Activated naive CD4-positive, alpha-beta T cell treated with anti-CD3 and anti-CD28 coated beads for 36 hours (primary cell): ENCODE measurements at regions of chr9 and their contacts with region 1.

Region 1: DNA sequence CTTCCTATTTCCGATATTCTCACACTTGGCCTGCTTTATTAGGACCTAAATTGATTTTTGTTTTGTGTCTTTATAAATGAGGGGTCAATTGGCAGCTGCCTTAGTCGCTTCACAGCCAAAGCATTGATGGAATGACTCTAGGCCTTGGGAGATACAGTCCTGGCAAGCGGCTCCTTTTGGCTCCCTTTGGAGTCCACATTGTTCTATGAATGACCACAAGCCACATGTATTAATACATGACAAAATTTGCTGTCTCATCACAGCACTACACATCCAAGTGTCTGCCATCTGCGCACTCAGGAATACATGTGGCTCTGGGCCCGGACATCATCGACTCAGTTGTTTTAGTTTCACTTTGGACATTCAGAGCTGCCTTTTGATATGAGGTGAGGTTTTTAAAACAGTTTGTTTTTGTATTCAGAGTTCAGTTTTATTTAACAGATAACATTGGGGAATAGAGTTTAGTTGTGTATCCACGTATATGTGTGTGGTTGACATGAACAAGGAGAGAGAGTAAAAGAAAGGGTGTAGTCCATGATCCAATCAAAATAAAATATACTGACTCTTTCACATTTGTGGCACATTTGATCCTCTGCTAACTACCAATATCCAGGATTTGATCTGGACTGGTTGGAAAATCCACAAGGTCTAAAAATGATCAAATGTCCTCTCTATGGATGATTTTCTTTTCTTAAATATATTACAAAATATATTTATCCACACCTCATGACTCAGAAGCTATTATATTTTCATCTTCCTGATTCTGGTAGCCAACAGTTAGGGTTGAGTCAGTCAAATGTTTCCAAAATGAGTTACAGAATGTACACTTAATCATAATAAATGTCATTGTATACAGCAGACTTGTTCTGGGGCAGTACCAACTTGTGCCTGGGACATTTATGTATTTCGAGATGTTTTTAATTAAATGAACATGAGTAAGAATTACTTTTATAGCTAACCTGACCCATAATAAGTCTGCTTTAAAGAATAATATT is 114.0 kb upstream of the MTAP start:
- DNase-seq: no peak
- H3K4me3 Mint-ChIP-seq: no peak overlapping the region
- H3K27ac Mint-ChIP-seq: peak overlapping the region; percentile 17
- H3K4me1 Mint-ChIP-seq: peaks cover 64% of the 10 kb centered on the region
- H3K27me3 Mint-ChIP-seq: no peaks in the 10 kb centered on the region

Region 2: GRCh38 chr9:21559424-21560280 is 128.8 kb before region 1 on chr9:
- CTCF ChIA-PET with region 1: no interaction called
- intact Hi-C with region 1: loop called (anchors 2 kb)
- DNase-seq: peak; percentile 61
- H3K4me3 Mint-ChIP-seq: peak overlapping the region; percentile 88
- H3K27ac Mint-ChIP-seq: peak overlapping the region; percentile 56
- H3K4me1 Mint-ChIP-seq: peaks cover 43% of the 10 kb centered on the region
- H3K27me3 Mint-ChIP-seq: no peaks in the 10 kb centered on the region

Region 3: DNA sequence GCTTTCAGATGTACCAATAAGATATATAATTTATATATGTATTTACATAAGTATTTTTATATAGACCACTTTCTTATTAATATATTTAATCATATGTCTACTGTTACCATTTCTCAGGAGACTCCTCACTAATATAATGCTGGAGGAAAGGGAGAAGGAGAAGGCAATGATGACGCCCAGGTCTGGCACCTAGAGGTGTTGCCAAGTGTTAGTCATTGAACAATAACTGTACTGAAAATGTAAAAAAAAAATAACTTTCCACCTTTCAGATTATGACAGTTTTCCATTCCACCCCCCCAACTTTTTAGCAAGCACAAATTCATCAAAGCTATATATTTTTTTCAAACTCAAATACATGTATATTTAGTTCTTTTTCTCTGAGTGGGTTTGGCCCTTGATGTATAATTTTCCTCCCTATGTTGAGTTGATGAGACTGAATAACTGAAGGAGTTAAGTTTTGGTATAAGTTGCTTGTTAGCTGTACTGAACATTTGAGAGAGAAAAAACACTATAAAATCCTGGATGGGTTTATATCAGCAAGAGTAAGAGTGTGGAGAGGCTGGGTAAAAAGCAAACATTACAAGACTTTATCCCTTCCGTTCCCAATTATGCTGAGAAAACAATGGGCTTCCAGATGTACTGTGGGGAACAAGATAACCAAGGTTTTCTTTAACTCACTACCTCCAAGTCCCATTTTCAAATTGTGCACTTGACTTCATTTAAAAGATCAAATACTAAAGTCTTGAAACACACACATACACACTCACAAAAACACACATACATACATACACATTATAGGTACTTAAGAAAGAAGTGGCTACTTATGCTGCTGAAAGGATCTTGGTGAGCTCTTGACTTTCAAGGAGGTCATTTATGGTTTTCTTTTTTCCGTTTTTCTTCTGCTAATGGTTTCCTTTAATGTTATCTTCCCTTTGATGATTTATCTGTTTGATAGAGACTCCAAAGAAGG is 63.4 kb before region 1 on chr9:
- CTCF ChIA-PET with region 1: interaction called, 6 read pairs
- intact Hi-C with region 1: loop called (anchors 1 kb)
- DNase-seq: peak; percentile 26
- H3K4me3 Mint-ChIP-seq: no peak overlapping the region
- H3K27ac Mint-ChIP-seq: peak overlapping the region; percentile 42
- H3K4me1 Mint-ChIP-seq: peaks cover 34% of the 10 kb centered on the region
- H3K27me3 Mint-ChIP-seq: no peaks in the 10 kb centered on the region

Region 4: DNA sequence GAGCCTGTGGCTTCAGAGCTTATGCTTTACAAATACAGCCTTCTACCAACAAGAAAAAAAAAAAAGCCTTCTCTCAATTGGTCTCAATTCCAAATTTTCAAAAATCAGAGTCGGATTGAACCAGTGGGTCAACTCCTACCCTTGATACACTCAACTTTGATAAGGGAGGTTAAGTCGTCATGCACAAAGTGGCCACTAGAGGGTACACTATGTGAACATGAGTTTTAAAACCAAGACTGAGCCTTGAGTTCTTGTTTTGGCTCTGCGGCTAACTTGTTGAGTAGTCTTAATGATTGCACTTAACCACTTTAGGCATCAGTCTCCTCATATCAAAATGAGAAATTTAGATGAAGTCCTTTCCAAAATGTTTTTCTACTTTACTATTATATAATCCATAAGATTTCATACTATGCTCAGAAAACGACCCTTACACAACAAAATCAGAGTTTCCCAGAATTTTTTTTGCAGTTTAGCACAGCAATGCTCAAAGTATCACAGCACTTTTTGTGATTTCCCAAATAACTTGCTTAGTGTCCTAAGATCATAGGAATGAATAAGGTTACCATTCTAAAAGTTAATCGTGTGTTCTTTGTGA is 21.2 kb after region 1 on chr9:
- CTCF ChIA-PET with region 1: interaction called, 10 read pairs
- intact Hi-C with region 1: loop called (anchors 2 kb)
- DNase-seq: peak; percentile 86
- H3K4me3 Mint-ChIP-seq: no peak overlapping the region
- H3K27ac Mint-ChIP-seq: no peak overlapping the region
- H3K4me1 Mint-ChIP-seq: peaks cover 14% of the 10 kb centered on the region
- H3K27me3 Mint-ChIP-seq: no peaks in the 10 kb centered on the region

Region 5: DNA sequence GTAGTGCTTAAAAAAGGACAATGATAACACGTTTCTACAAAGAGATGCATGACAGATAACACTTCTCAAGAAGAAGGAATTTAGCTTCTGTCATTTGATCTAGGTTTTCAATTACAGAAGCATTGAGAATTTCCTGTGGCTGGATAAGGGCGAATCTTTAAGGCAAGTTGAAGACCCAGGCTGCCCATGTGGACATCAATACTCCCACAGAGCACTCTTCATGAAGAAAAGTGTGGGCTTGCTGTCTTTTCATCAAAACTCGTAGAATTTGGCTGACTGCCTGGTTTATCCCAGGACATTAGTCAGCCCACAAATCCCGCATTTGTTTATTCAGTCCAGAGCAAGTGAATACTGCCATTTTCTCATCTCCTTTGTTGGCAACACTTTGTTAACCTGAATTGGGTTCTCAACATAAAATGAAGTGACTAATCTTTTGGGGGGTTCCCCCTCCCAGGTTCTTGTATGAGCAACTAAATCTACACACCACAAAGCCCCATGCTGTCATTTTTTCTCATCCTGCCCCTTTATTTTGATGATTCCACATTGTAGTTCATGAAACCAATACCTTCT is 364.1 kb after region 1 on chr9:
- CTCF ChIA-PET with region 1: no interaction called
- intact Hi-C with region 1: loop called (anchors 10 kb)
- DNase-seq: peak; percentile 67
- H3K4me3 Mint-ChIP-seq: no peak overlapping the region
- H3K27ac Mint-ChIP-seq: no peak overlapping the region
- H3K4me1 Mint-ChIP-seq: peaks cover 29% of the 10 kb centered on the region
- H3K27me3 Mint-ChIP-seq: peaks cover 20% of the 10 kb centered on the region